CD14-positive monocyte (primary cell): ENCODE measurements at regions of chr5 and their contacts with region 1.

Region 1: DNA sequence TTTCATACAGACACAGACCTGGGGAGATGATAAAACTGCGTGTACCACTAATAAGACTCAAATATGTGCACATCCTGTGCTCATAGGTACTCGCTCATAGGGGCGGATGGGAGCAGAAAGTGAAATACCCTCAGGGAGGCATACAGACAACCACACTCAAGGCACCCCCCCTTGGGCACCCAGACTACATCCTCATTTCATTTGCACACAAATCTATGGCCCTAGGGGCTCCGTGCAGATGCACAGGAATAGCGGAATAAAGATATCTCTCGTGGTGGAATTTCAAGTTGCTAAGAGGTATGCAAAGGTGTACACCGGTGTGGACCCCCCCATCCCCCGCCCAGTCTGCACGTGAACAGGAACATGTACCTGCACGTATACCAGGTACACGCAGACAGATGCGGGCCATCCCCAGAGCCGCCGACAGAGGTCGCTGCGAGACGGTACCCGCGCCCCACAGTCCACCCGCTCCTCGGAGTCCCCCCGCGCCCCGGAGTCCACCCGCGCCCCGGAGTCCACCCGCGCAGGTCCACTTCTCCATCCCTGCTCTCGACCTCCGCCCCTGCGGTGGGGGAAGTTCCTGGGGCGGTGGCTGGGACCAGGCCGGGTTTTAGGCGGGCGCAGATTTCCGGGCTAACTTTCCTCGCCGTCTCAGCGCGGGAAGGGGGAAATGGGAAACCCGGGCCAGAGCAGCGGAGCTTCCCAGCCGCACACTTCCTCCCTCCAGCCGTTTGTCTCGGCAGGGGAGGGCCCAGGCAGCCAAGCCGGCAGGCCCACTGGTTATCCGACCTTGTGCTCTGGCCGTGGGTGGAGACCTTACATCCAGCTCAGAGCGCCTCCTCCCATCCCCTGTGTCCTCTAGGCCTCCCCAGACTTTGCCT is 1.0 kb upstream of the IL12B start:
- DNase-seq: peak; percentile 40 to 86 (median 48)
- H3K4me3 ChIP-seq: peak overlapping the region in 2 of 3 experiments; percentile 12 to 62
- H3K4me3 Mint-ChIP-seq: peak overlapping the region; percentile 61 to 76
- H3K27ac ChIP-seq: no peak overlapping the region
- H3K27ac Mint-ChIP-seq: peak overlapping the region in 5 of 7 donors; percentile 26 to 68 (median 56)
- H3K4me1 ChIP-seq: peaks cover 12 to 13% of the 10 kb centered on the region in 2 donors
- H3K4me1 Mint-ChIP-seq: peaks cover 26% of the 10 kb centered on the region
- H3K27me3 ChIP-seq: no peaks in the 10 kb centered on the region
- H3K27me3 Mint-ChIP-seq: peaks cover 0 to 3% (median 0%) of the 10 kb centered on the region in 3 donors
- CTCF ChIP-seq: peak; percentile 95

Region 2: GRCh38 chr5:159262859-159263567 is 68.3 kb before region 1 on chr5 and contains the start of gene UBLCP1:
- intact Hi-C with region 1: loop called in 1 of 2 experiments (anchors 10 kb)
- DNase-seq: peak; percentile 81 to 85 (median 82)
- H3K4me3 ChIP-seq: peak within 1 kb of the TSS; percentile 58 to 83 (median 68)
- H3K4me3 Mint-ChIP-seq: peak within 1 kb of the TSS; percentile 98
- H3K27ac ChIP-seq: peak within 1 kb of the TSS; percentile 81 to 94
- H3K27ac Mint-ChIP-seq: peak within 1 kb of the TSS; percentile 97 to 100 (median 99)
- H3K4me1 ChIP-seq: peaks cover 15 to 21% of the 10 kb centered on the region in 2 donors
- H3K4me1 Mint-ChIP-seq: peaks cover 25% of the 10 kb centered on the region
- H3K27me3 ChIP-seq: no peaks in the 10 kb centered on the region
- H3K27me3 Mint-ChIP-seq: peaks cover 2 to 9% (median 8%) of the 10 kb centered on the region in 3 donors
- CTCF ChIP-seq: no peak
- polyA plus RNA-seq, gene UBLCP1: 8.8 to 31.5 (median 22.7) TPM

Region 3: GRCh38 chr5:159405611-159406031 is 74.3 kb after region 1 on chr5:
- intact Hi-C with region 1: loop called in 1 of 2 experiments (anchors 10 kb)
- DNase-seq: peak in 2 of 3 donors; percentile 7 to 66
- H3K4me3 ChIP-seq: no peak overlapping the region
- H3K4me3 Mint-ChIP-seq: no peak overlapping the region
- H3K27ac ChIP-seq: no peak overlapping the region
- H3K27ac Mint-ChIP-seq: peak overlapping the region in 1 of 7 donors; percentile 7
- H3K4me1 ChIP-seq: peaks cover 8 to 12% of the 10 kb centered on the region in 2 donors
- H3K4me1 Mint-ChIP-seq: peaks cover 16% of the 10 kb centered on the region
- H3K27me3 ChIP-seq: no peaks in the 10 kb centered on the region
- H3K27me3 Mint-ChIP-seq: peaks cover 0 to 2% (median 0%) of the 10 kb centered on the region in 3 donors
- CTCF ChIP-seq: no peak

Region 4: DNA sequence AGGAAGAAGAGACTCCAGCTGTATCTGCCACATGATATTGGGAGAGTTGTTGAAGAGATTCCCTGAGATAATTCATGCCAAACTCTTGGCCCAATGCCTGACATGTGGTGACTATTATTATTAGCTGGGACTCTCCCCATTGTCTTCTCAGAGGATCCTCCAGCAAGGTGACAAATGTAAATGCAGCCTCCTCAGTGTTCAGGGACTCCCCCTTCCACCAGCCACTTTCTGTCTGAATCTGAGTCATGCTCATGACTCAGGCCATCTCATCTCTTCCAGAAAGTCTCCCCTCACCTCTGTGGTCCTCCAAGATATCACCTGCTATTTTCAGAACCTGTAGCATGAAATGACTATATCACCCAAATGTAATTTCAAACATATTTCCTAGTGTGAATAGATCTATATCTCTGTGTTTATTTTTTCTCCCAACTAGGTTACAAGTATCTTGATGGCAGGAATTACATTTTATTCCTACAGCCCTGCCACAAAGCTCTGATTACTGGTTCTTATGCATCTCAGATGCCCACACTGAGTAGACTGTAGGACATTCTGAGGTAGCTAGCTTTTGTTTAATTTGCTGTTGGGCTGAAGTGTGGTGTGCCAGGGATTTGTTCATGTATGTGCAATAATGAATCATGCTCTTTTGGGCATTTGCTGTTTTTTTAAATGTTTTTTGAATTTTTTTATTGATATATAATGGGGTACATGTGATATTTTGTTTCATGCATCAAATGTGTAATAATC is 125.6 kb after region 1 on chr5:
- intact Hi-C with region 1: loop called in 1 of 2 experiments (anchors 5 kb)
- DNase-seq: peak; percentile 19 to 89 (median 29)
- H3K4me3 ChIP-seq: no peak overlapping the region
- H3K4me3 Mint-ChIP-seq: peak overlapping the region in 1 of 2 donors; percentile 39
- H3K27ac ChIP-seq: no peak overlapping the region
- H3K27ac Mint-ChIP-seq: peak overlapping the region in 3 of 7 donors; percentile 3 to 73 (median 63)
- H3K4me1 ChIP-seq: peaks cover 15 to 25% of the 10 kb centered on the region in 2 donors
- H3K4me1 Mint-ChIP-seq: peaks cover 41% of the 10 kb centered on the region
- H3K27me3 ChIP-seq: peaks cover 2 to 12% of the 10 kb centered on the region in 2 donors
- H3K27me3 Mint-ChIP-seq: peaks cover 11 to 24% (median 22%) of the 10 kb centered on the region in 3 donors
- CTCF ChIP-seq: no peak